Dorsolateral prefrontal cortex (tissue), 120 donors: ENCODE measurements at regions of chr6 and their contacts with region 1.

Region 1: DNA sequence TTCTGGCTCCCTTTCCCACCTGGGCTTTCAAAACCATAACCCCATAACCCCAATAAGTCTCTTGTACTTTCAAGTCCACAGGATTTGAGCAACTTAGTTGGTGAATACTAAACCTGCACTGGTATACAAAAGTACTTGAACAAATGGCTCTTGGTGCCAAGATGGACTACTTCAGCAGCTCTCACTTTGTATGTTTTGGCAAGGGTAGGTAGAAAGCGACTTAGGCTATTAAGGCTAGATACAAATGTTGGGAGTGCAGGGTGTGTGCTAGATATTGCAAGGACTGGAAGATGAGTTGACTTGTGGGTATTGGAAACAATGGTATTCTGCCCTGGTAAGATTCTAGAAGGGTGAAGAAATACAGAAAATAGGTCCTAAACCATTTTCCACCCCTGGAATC is 182.6 kb upstream of the MOCS1 start:
- DNase-seq: no peak
- H3K4me3 ChIP-seq: no peak overlapping the region
- H3K27ac ChIP-seq: no peak overlapping the region
- H3K27me3 ChIP-seq: peaks cover 0 to 18% (median 3%) of the 10 kb centered on the region in 45 donors
- CTCF ChIP-seq: no peak

Region 2: DNA sequence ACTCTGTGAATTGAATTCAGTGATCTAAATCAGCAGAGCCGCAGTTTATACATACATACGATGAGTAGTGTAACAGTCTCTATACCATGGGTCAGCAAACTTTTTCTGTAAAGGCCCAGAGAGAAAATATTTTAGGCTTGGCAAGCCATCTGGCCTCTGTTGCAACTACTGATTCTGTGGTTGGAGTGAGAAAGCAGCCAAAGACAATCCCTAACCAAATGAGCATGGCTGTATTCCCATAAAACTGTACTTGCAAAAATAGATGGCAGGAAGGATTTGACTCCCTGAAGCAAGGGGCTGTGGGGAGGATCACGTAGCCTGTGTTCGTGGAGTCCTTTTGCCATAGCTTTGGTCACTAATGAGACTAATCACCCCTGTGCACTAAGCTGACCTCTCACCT is 164.7 kb before region 1 on chr6:
- intact Hi-C with region 1: no loop called
- DNase-seq: no peak
- H3K4me3 ChIP-seq: no peak overlapping the region
- H3K27ac ChIP-seq: no peak overlapping the region
- H3K27me3 ChIP-seq: peaks cover 0 to 5% (median 0%) of the 10 kb centered on the region in 45 donors
- CTCF ChIP-seq: no peak

Region 3: GRCh38 chr6:39992861-39993622 is 123.8 kb before region 1 on chr6:
- intact Hi-C with region 1: loop called in 1 of 2 experiments (anchors 5 kb)
- DNase-seq: no peak
- H3K4me3 ChIP-seq: no peak overlapping the region
- H3K27ac ChIP-seq: no peak overlapping the region
- H3K27me3 ChIP-seq: no peaks in the 10 kb centered on the region
- CTCF ChIP-seq: no peak

Region 4: GRCh38 chr6:40028449-40028848 is 88.4 kb before region 1 on chr6:
- intact Hi-C with region 1: no loop called
- DNase-seq: no peak
- H3K4me3 ChIP-seq: no peak overlapping the region
- H3K27ac ChIP-seq: no peak overlapping the region
- H3K27me3 ChIP-seq: peaks cover 0 to 30% (median 0%) of the 10 kb centered on the region in 45 donors
- CTCF ChIP-seq: no peak